H1 (cell line): ENCODE measurements at regions of chr2 and their contacts with region 1.

Region 1: DNA sequence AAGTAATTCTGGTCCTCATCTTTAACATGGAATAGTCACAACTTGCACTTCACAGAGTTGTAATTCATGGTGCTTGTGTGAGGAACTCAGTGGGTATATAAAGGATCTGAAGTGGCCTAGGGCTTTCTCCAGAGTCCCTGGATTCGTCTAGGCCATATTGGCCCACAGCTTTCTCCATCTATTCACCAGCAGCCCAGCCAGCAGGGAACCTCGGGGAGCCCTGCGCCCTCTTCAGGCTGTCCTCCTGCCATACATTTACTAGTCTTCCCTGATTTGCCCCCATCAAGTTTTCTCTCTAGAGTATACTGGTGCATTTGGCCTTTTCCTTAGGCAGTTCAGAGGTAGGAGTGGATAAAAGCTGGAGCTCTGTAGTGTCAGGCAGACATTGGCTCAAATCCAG is 278.3 kb downstream of the MYCN start:
- DNase-seq: peak in 1 of 2 experiments; percentile 63
- H3K4me3 ChIP-seq: no peak overlapping the region
- H3K27ac ChIP-seq: no peak overlapping the region
- H3K4me1 ChIP-seq: peaks cover 0 to 15% (median 4%) of the 10 kb centered on the region in 4 experiments; a peak in 5 of 7 replicates
- H3K27me3 ChIP-seq: no peaks in the 10 kb centered on the region
- CTCF ChIP-seq: peak; percentile 59 to 70 (median 61)
- EP300 ChIP-seq: no peak
- POLR2A ChIP-seq: no peak
- RAD21 ChIP-seq: peak; percentile 64 to 70

Region 2: GRCh38 chr2:16204891-16205620 is 13.6 kb before region 1 on chr2:
- CTCF ChIA-PET with region 1: interaction called, 25 read pairs
- POLR2A ChIA-PET with region 1: no interaction called
- DNase-seq: no peak
- H3K4me3 ChIP-seq: no peak overlapping the region
- H3K27ac ChIP-seq: no peak overlapping the region
- H3K4me1 ChIP-seq: peaks cover 0 to 2% (median under 1%) of the 10 kb centered on the region in 4 experiments; a peak in 3 of 7 replicates
- H3K27me3 ChIP-seq: no peaks in the 10 kb centered on the region
- CTCF ChIP-seq: no peak
- EP300 ChIP-seq: no peak
- POLR2A ChIP-seq: no peak
- RAD21 ChIP-seq: no peak

Region 3: GRCh38 chr2:16238001-16238761 is 19.6 kb after region 1 on chr2:
- CTCF ChIA-PET with region 1: interaction called, 11 read pairs
- POLR2A ChIA-PET with region 1: no interaction called
- DNase-seq: no peak
- H3K4me3 ChIP-seq: no peak overlapping the region
- H3K27ac ChIP-seq: no peak overlapping the region
- H3K4me1 ChIP-seq: peaks cover 0 to 13% (median 4%) of the 10 kb centered on the region in 4 experiments; a peak in 5 of 7 replicates
- H3K27me3 ChIP-seq: peaks cover 0 to 1% (median 0%) of the 10 kb centered on the region in 4 experiments; a peak in 1 of 7 replicates
- CTCF ChIP-seq: no peak
- EP300 ChIP-seq: no peak
- POLR2A ChIP-seq: no peak
- RAD21 ChIP-seq: no peak